Aorta (tissue), 5 donors: ENCODE measurements at regions of chr3 and their contacts with region 1.

Region 1: GRCh38 chr3:28726840-28727239 is 378.2 kb upstream of the AZI2 start:
- DNase-seq: peak; percentile 58 to 77
- ATAC-seq: peak; percentile 69
- H3K4me3 ChIP-seq: no peak overlapping the region
- H3K27ac ChIP-seq: no peak overlapping the region
- H3K4me1 ChIP-seq: peaks cover 0 to 4% of the 10 kb centered on the region in 2 donors
- H3K27me3 ChIP-seq: no peaks in the 10 kb centered on the region

Region 2: DNA sequence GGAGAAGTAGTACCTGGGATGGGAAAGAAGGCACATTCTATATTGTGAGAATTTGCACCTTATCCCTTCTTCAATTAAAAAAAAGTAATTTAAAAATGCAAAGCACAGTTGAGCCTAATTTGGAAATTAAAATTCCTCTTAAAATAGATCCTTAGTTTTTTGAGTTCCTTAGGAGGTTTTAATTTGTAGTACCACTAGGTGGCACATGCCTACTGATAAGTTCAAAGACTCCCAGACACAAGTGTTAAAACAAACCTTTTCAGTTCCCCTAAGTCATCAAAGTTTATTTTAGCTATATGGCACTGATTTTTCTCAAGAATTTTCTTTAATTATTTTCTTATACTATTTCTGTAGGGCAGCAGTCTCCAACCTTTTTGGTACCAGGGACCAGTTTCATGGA is 250.6 kb before region 1 on chr3:
- intact Hi-C with region 1: loop called in 1 of 2 experiments (anchors 5 kb)
- DNase-seq: no peak
- ATAC-seq: no peak
- H3K4me3 ChIP-seq: no peak overlapping the region
- H3K27ac ChIP-seq: no peak overlapping the region
- H3K4me1 ChIP-seq: no peaks in the 10 kb centered on the region
- H3K27me3 ChIP-seq: no peaks in the 10 kb centered on the region